ENCODE measurements at regions of chr17 and their contacts with region 1.

Region 1: GRCh38 chr17:8091033-8091687 is 3.6 kb upstream of the ALOX12B start:
- DNase-seq: no peak
- H3K4me3 Mint-ChIP-seq: no peak overlapping the region
- H3K27ac Mint-ChIP-seq: no peak overlapping the region
- H3K4me1 Mint-ChIP-seq: peaks cover 16% of the 10 kb centered on the region
- H3K27me3 Mint-ChIP-seq: peaks cover 45% of the 10 kb centered on the region

Region 2: DNA sequence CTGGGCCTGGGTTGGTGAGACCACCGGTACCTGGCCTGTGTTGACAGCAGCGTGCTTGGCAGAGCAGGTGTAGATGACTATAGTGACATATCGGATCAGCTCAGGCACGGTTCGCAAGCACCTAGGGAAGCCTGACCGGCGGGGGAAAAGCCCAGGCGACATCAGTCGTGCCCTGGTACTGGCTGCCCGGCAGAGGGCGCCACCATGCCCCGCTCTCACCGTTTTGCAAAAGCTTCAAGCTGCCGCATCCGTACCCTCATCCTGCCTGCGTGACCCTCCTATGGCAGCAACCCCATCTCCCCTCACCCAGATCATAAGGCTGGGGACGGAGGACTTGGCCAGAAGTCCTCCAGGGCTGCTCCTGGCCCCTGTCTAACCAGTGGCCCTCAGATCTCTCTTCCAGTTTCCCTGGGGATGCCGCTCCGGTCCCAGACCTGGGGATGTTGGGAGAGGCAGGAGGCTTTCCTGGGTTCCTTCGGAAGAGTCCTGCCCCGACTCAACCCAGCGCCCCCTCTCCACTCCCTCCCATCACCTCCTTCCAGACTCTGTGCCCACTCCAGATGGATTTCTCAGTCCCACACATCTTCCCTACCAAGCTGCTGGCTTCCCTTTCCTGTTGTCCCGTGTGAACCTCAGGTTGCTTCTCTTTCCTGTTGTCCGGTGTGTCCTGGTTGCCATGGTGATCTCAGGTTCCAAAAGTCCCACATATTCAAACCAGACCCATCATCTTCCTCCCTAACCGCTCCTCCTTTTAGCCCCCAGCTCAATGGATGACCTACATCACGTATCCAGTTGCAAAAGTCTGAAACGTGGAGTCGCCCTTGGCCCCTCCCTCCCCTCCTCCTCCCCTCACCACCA is 17.3 kb before region 1 on chr17:
- CTCF ChIA-PET with region 1: interaction called, 29 read pairs
- POLR2A ChIA-PET with region 1: no interaction called
- DNase-seq: peak; percentile 84
- H3K4me3 Mint-ChIP-seq: peak overlapping the region; percentile 53
- H3K27ac Mint-ChIP-seq: no peak overlapping the region
- H3K4me1 Mint-ChIP-seq: peaks cover 27% of the 10 kb centered on the region
- H3K27me3 Mint-ChIP-seq: peaks cover 62% of the 10 kb centered on the region

Region 3: DNA sequence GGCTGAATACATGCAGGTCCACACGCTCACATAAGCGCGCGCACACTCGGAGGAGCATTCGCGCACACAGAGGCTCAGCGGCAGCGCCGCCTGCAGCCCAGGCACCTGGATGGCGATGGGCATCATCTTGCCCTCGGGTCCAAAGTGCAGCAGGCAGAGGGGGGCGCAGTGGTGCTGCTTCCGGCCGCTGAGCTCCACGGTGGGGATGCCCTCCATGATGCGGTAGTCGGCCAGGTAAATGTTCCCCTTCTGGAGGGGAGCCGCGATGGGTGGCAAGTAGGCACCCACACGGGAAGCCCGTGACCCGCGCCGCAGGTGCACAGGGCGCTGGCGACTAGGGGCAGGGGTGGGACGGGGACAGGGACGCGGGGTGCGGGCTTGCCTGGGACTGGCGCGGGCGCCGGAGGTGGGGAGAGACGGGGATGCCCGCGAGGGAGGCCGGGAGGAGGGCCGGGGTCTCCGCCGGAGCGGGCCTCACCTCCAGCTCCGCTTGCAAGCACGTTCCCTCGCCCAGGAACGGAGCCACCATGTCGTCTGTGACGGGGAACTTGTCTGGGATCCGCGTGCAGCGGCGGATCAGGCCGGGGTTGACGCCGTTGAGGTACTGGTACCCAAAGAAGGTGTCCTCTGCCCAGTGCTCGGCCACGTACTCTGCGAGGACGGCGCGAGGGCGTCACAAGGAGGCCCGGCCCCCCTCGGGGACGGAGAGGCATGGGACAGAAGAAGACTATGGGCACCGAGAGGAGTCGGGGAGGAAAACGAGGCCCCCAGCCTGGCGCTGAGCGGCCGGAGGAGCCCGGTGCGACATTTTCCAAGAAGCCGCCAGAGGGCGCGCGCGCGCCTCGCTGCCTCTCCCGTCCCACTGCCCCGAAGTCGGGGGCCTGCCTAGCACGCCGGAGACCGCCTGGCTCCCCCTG is 11.6 kb before region 1 on chr17:
- CTCF ChIA-PET with region 1: interaction called, 29 read pairs
- POLR2A ChIA-PET with region 1: no interaction called
- DNase-seq: peak; percentile 80
- H3K4me3 Mint-ChIP-seq: peak overlapping the region; percentile 77
- H3K27ac Mint-ChIP-seq: peak overlapping the region; percentile 54
- H3K4me1 Mint-ChIP-seq: peaks cover 18% of the 10 kb centered on the region
- H3K27me3 Mint-ChIP-seq: peaks cover 18% of the 10 kb centered on the region

Region 4: GRCh38 chr17:8109661-8110464 is 18.7 kb after region 1 on chr17:
- CTCF ChIA-PET with region 1: interaction called, 67 read pairs
- POLR2A ChIA-PET with region 1: interaction called, 5 read pairs
- DNase-seq: peak; percentile 80
- H3K4me3 Mint-ChIP-seq: peak overlapping the region; percentile 37
- H3K27ac Mint-ChIP-seq: no peak overlapping the region
- H3K4me1 Mint-ChIP-seq: peaks cover 16% of the 10 kb centered on the region
- H3K27me3 Mint-ChIP-seq: peaks cover 34% of the 10 kb centered on the region

Region 5: DNA sequence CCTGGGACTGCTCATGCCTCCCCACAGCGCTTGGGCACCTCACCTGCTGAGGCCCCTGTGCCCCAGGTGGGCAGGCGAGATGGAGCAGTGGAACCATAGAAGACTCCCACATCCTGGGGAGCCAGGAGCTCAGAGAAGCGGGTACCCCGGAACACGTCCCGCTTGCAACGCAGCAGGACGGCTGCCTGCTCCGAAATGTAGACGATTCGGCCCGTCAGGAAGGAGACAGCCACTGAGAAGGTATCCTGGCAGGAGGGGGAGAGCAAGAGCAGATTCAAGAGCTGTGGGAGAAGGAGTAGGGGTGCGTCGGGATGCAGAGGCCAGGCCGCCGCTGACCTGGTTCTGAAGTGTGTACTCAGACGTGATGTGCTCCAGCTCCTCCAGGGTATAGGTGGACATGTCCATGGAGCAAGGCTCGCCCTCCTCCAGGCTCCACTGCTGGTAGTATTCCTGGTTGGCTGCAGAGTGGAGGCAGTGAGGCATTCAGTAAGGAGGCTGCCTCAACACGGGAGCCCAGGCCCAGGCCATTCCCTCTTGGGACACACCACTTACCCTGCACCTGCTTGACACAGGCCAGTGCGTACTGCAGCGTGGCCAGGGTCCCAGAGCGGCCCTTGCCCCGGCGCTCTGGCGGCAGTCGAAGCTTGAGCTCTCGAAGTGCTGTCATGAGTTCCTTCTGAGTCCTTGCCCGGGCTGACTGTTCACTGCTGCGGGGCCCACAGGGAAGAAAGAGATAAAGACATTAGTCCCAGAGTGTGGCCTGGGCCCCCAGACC is 58.4 kb after region 1 on chr17:
- CTCF ChIA-PET with region 1: no interaction called
- POLR2A ChIA-PET with region 1: no interaction called
- DNase-seq: no peak
- H3K4me3 Mint-ChIP-seq: peak overlapping the region; percentile 84
- H3K27ac Mint-ChIP-seq: peak overlapping the region; percentile 16
- H3K4me1 Mint-ChIP-seq: peaks cover 35% of the 10 kb centered on the region
- H3K27me3 Mint-ChIP-seq: no peaks in the 10 kb centered on the region

Measured in activated CD4-positive, alpha-beta memory T cell treated with anti-CD3 and anti-CD28 coated beads, Interleukin-2, amount 10 ng/mL, durations not matched to agents 7 days and 5 days (primary cell).